WTC11 (cell line): ENCODE measurements at regions of chr20 and their contacts with region 1.

Region 1: GRCh38 chr20:3753098-3753980 is 14.2 kb downstream of the ADISSP start:
- DNase-seq: peak; percentile 78
- ATAC-seq: peak; percentile 59
- H3K4me3 Mint-ChIP-seq: no peak overlapping the region
- H3K27ac Mint-ChIP-seq: no peak overlapping the region
- H3K4me1 Mint-ChIP-seq: peaks cover 6% of the 10 kb centered on the region
- H3K27me3 Mint-ChIP-seq: peaks cover 25% of the 10 kb centered on the region
- CTCF ChIP-seq: peak; percentile 57; the same call in 1 of the 2 replicates

Region 2: GRCh38 chr20:3670511-3670910 is 82.8 kb before region 1 on chr20:
- CTCF ChIA-PET with region 1: interaction called, 17 read pairs
- POLR2A ChIA-PET with region 1: no interaction called
- DNase-seq: peak; percentile 38
- ATAC-seq: peak; percentile 29
- H3K4me3 Mint-ChIP-seq: no peak overlapping the region
- H3K27ac Mint-ChIP-seq: no peak overlapping the region
- H3K4me1 Mint-ChIP-seq: peaks cover 30% of the 10 kb centered on the region
- H3K27me3 Mint-ChIP-seq: peaks cover 38% of the 10 kb centered on the region
- CTCF ChIP-seq: no peak

Region 3: GRCh38 chr20:3696200-3696599 is 57.1 kb before region 1 on chr20:
- CTCF ChIA-PET with region 1: interaction called, 46 read pairs
- POLR2A ChIA-PET with region 1: no interaction called
- DNase-seq: no peak
- ATAC-seq: no peak
- H3K4me3 Mint-ChIP-seq: no peak overlapping the region
- H3K27ac Mint-ChIP-seq: no peak overlapping the region
- H3K4me1 Mint-ChIP-seq: no peaks in the 10 kb centered on the region
- H3K27me3 Mint-ChIP-seq: no peaks in the 10 kb centered on the region
- CTCF ChIP-seq: peak; percentile 67; the same call in 1 of the 2 replicates

Region 4: DNA sequence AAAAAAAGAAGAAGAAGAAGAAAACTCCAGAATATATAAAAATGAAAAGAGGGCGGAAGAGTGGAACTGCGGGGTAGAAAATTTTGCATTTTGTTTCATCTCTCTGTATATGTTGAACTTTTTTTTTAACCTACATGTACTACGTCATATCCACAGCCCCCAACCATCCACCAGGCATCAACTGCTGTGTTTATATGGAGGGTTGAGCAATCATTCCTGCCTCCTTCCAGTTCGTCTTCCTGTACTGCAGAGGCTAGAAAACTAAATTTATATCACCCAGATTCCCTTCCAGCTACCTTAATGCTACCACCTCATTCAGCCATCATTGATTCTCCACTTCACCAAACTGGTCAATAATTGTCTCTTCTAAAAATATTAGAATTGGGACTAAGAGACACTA is 31.4 kb before region 1 on chr20:
- CTCF ChIA-PET with region 1: interaction called, 88 read pairs
- POLR2A ChIA-PET with region 1: interaction called, 4 read pairs
- DNase-seq: no peak
- ATAC-seq: no peak
- H3K4me3 Mint-ChIP-seq: no peak overlapping the region
- H3K27ac Mint-ChIP-seq: no peak overlapping the region
- H3K4me1 Mint-ChIP-seq: peaks cover 8% of the 10 kb centered on the region
- H3K27me3 Mint-ChIP-seq: peaks cover 2% of the 10 kb centered on the region
- CTCF ChIP-seq: no peak

Region 5: GRCh38 chr20:3767427-3768341 is 14.3 kb after region 1 on chr20 and contains the start of gene ADISSP:
- CTCF ChIA-PET with region 1: interaction called, 195 read pairs
- POLR2A ChIA-PET with region 1: interaction called, 3 read pairs
- DNase-seq: peak; percentile 99
- ATAC-seq: peak; percentile 94
- H3K4me3 Mint-ChIP-seq: peak within 1 kb of the TSS; percentile 94
- H3K27ac Mint-ChIP-seq: peak within 1 kb of the TSS; percentile 79; the same call in 1 of the 2 replicates
- H3K4me1 Mint-ChIP-seq: peaks cover 19% of the 10 kb centered on the region
- H3K27me3 Mint-ChIP-seq: peaks cover 13% of the 10 kb centered on the region
- CTCF ChIP-seq: no peak
- total RNA-seq, gene ADISSP: 109 to 129 TPM (median 113 TPM) in 3 replicates

Region 6: GRCh38 chr20:3820048-3820900 is 66.9 kb after region 1 on chr20 and contains the start of gene AP5S1:
- CTCF ChIA-PET with region 1: interaction called, 30 read pairs
- POLR2A ChIA-PET with region 1: interaction called, 7 read pairs
- DNase-seq: peak; percentile 99
- ATAC-seq: peak; percentile 80
- H3K4me3 Mint-ChIP-seq: peak within 1 kb of the TSS; percentile 78
- H3K27ac Mint-ChIP-seq: peak within 1 kb of the TSS; percentile 97
- H3K4me1 Mint-ChIP-seq: peaks cover 28% of the 10 kb centered on the region
- H3K27me3 Mint-ChIP-seq: no peaks in the 10 kb centered on the region
- CTCF ChIP-seq: peak; percentile 94
- total RNA-seq, gene AP5S1: 2.8 to 4.1 TPM (median 3.1 TPM) in 3 replicates